Head of caudate nucleus (tissue), 42 donors: ENCODE measurements at regions of chr10 and their contacts with region 1.

Region 1: GRCh38 chr10:127715782-127716378 is 21.1 kb upstream of the FOXI2 start:
- DNase-seq: no peak

Region 2: DNA sequence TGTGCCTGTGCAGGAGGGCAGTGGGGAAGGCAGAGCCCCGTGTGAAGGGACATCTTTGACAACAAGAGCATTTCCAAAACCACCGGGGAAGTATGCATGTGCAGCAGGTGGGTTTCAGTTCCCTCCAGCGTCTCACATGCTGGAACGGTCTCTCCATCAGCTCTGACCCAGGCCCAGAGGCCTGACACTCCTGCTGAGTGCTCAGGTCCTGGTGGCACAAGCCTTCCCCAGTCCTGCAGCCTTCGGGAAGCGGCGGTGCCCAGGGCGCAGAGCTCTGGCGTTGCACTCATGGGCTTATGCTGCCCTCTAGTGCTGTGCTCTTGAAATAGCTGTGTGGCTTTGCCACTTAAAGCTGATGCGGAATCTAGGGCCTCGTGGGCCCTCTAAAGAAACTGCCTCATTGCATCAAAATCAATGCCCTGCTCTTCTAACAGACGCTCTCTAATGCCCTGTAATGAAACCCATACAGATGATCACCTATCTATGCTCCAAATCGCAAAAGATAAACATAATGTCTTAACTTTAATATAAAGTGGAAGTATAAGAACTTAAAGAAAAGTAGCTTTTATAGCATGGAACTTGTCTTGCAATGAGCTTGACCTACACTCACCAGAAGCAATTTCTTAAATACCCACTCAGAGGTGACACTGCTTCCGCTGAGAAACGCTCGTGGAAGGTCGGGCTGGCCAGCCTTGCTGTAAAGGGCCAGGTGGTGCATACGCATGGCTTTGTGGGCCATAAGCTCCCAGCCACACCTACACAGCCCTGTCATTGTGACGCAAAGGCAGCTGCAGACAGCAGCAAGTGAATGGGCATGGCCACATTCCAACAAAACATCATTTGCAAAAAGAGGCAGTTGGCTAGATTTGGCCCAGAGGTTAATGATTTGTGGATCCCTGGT is 138.2 kb after region 1 on chr10:
- intact Hi-C with region 1: loop called (anchors 5 kb)
- DNase-seq: peak; percentile 70 to 92 (median 82)